Caco-2 (cell line): ENCODE measurements at regions of chr12 and their contacts with region 1.

Region 1: DNA sequence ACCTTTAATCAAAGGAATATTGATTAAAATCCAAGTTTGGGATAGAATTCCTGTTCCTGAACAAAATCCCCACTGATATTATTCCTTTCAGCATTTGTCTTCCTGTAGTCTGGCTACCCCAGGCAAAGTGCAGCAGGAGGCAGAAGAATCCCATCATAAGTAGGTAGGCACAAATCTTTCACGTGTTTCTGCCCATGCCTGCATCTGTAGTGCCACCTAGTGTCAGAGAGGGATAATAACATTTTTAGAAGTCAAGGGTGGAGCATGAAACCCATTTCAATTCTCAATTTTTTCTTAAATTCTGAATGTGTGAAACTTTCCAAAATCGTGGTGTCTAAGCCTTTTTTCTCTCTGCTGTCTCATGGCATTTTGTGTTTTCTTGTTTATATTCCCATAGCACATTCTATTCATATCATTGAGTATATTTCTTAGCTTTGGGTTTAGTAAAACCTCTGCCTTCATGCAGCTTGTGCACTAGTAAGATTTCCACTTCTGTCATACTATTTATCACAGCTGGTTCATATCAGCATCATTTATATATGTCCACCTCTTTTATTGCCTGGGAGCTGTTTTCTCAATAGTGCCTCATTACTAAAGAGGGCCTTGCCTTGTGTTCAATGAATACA is 47.8 kb upstream of the RERG start:
- DNase-seq: peak; percentile 71 to 72
- H3K4me3 ChIP-seq: no peak overlapping the region
- H3K4me3 Mint-ChIP-seq: no peak overlapping the region
- H3K27ac Mint-ChIP-seq: no peak overlapping the region
- H3K4me1 ChIP-seq: no peaks in the 10 kb centered on the region
- H3K4me1 Mint-ChIP-seq: no peaks in the 10 kb centered on the region
- H3K27me3 ChIP-seq: no peaks in the 10 kb centered on the region
- H3K27me3 Mint-ChIP-seq: no peaks in the 10 kb centered on the region
- CTCF ChIP-seq: peak; percentile 87 to 96

Region 2: DNA sequence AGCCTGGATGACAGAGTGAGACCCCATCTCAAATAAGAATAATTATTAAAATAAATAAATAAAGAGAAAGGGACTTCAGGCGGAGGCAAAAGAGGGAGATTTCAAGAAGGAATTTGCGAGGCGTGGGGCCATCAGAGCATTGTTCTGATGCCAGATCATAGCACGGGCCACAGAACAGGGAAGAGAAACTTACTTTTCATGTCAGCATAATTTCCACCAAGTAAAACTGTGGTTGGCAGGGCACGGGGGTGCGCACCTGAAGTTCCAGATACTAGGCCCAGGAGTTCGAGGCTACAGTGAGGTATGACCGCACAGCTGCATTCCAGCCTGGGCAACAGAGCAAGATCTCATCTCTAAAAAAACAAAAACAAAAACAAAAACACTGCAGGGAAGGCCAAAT is 690.4 kb before region 1 on chr12:
- CTCF ChIA-PET with region 1: interaction called, 13 read pairs
- POLR2A ChIA-PET with region 1: no interaction called
- intact Hi-C with region 1: no loop called
- DNase-seq: no peak
- H3K4me3 ChIP-seq: no peak overlapping the region
- H3K4me3 Mint-ChIP-seq: no peak overlapping the region
- H3K27ac Mint-ChIP-seq: no peak overlapping the region
- H3K4me1 ChIP-seq: 0 out of 2 replicates have a peak, but pooled peaks cover 3% of the 10 kb centered on the region
- H3K4me1 Mint-ChIP-seq: peaks cover 8% of the 10 kb centered on the region
- H3K27me3 ChIP-seq: no peaks in the 10 kb centered on the region
- H3K27me3 Mint-ChIP-seq: no peaks in the 10 kb centered on the region
- CTCF ChIP-seq: no peak

Region 3: DNA sequence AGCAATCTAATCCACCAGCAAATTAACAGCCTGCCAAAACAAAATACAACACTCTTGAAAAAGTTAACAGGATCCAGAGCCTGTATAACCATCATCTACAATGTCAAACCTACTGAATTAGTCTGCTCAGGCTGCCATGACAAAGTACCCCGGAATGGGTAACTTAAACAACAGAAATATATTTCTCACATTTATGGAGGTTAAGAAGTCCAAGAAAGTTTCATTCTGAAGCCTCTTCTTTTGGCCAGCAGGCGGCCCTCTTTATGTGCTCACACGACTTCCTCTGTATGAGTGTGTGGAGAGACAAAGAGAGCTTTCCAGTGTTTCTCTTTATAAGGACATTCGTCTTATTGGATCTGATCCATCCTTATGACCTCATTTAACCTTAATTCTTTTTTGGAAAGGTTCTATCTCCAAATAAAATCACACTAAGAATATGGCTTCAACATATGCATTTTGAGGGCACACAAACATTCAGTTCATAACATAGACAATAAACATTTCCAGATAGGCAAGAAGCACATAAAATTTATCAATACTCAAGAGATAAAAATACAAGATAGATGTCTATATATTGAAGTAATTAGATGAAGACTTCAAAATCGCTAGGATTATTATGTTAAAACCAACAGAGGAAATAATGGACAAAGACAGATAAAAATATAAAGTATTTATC is 41.9 kb before region 1 on chr12:
- CTCF ChIA-PET with region 1: interaction called, 4 read pairs
- POLR2A ChIA-PET with region 1: no interaction called
- intact Hi-C with region 1: loop called (anchors 1 kb)
- DNase-seq: peak; percentile 41 to 50
- H3K4me3 ChIP-seq: no peak overlapping the region
- H3K4me3 Mint-ChIP-seq: no peak overlapping the region
- H3K27ac Mint-ChIP-seq: no peak overlapping the region
- H3K4me1 ChIP-seq: no peaks in the 10 kb centered on the region
- H3K4me1 Mint-ChIP-seq: no peaks in the 10 kb centered on the region
- H3K27me3 ChIP-seq: no peaks in the 10 kb centered on the region
- H3K27me3 Mint-ChIP-seq: peaks cover 9% of the 10 kb centered on the region
- CTCF ChIP-seq: peak; percentile 82 to 85

Region 4: DNA sequence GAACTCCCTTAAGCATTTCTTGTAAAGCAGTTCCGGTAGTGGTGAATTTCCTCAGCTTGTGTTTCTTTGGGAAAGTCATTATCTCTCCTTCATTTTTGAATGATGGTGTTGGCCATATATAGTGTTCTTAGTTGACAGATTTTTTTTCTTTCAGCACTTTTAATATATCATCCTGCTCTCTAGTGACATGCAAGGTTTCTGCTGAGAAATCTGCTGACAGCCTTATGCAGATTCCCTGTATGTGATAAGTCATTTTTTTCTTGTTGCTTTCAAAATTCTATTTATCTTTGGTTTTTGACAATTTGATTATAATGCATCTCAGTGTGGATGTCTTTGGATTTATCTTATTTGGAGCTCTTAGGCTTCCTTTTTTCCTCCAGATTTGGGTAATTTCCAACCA is 189.0 kb after region 1 on chr12:
- CTCF ChIA-PET with region 1: no interaction called
- POLR2A ChIA-PET with region 1: no interaction called
- intact Hi-C with region 1: no loop called
- DNase-seq: no peak
- H3K4me3 ChIP-seq: no peak overlapping the region
- H3K4me3 Mint-ChIP-seq: no peak overlapping the region
- H3K27ac Mint-ChIP-seq: no peak overlapping the region
- H3K4me1 ChIP-seq: peaks cover 5% of the 10 kb centered on the region; the same call in 1 of the 2 replicates
- H3K4me1 Mint-ChIP-seq: peaks cover 12% of the 10 kb centered on the region
- H3K27me3 ChIP-seq: no peaks in the 10 kb centered on the region; the same call in 1 of the 2 replicates
- H3K27me3 Mint-ChIP-seq: no peaks in the 10 kb centered on the region
- CTCF ChIP-seq: no peak